ENCODE measurements at regions of chr3 and their contacts with region 1.

Region 1: GRCh38 chr3:26712211-26713026 is 89.8 kb downstream of the LRRC3B start:
- DNase-seq: no peak
- ATAC-seq: peak; percentile 44 to 47

Region 2: DNA sequence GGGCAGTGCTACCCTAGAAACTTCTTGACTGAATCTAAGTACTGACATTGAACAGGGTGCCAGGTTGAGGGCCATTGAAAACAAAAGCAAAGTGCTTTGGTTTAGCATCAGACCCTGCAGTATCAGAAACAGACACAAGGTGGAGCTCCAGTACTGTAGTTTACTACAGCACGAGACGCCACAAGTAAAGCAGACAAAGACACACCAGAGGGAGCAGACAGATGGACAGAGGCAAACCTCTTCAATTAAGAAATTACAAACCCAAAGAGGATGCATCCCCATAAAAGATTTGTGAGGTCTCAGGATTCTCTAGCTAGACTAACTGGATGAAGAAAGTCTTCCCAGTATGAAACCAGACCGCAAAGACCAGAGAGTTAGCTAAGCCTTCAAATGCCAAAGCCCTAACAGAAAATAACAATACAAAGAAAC is 1064.3 kb before region 1 on chr3:
- intact Hi-C with region 1: loop called in 1 of 2 experiments (anchors 10 kb)
- DNase-seq: peak; percentile 45
- ATAC-seq: peak; percentile 65 to 85

Region 3: GRCh38 chr3:25843332-25843731 is 869.1 kb before region 1 on chr3:
- intact Hi-C with region 1: loop called (anchors 2 to 10 kb)
- DNase-seq: no peak
- ATAC-seq: no peak

Region 4: GRCh38 chr3:25904206-25904605 is 808.2 kb before region 1 on chr3:
- intact Hi-C with region 1: loop called (anchors 5 to 10 kb)
- DNase-seq: no peak
- ATAC-seq: peak; percentile 55 to 56